ENCODE measurements at regions of chr6 and their contacts with region 1.

Region 1: GRCh38 chr6:125114248-125114858 is 39.2 kb upstream of the TPD52L1 start:
- DNase-seq: peak in 1 of 2 donors; percentile 19
- ATAC-seq: peak in 2 of 4 donors; percentile 61 to 79
- H3K4me3 ChIP-seq: no peak overlapping the region
- H3K27ac ChIP-seq: no peak overlapping the region
- H3K4me1 ChIP-seq: no peaks in the 10 kb centered on the region
- H3K27me3 ChIP-seq: no peaks in the 10 kb centered on the region
- CTCF ChIP-seq: peak; percentile 92

Region 2: GRCh38 chr6:124870611-124871459 is 243.5 kb before region 1 on chr6:
- intact Hi-C with region 1: loop called (anchors 2 to 5 kb)
- DNase-seq: no peak
- ATAC-seq: no peak
- H3K4me3 ChIP-seq: no peak overlapping the region
- H3K27ac ChIP-seq: no peak overlapping the region
- H3K4me1 ChIP-seq: no peaks in the 10 kb centered on the region
- H3K27me3 ChIP-seq: no peaks in the 10 kb centered on the region
- CTCF ChIP-seq: peak; percentile 62

Region 3: GRCh38 chr6:124961777-124962611 is 152.4 kb before region 1 on chr6 and contains the start of gene RNF217:
- intact Hi-C with region 1: loop called (anchors 5 to 10 kb)
- DNase-seq: peak; percentile 66 to 85
- ATAC-seq: peak; percentile 64 to 72 (median 68)
- H3K4me3 ChIP-seq: peak within 1 kb of the TSS; percentile 85
- H3K27ac ChIP-seq: peak within 1 kb of the TSS; percentile 96
- H3K4me1 ChIP-seq: peaks cover 32% of the 10 kb centered on the region
- H3K27me3 ChIP-seq: no peaks in the 10 kb centered on the region
- CTCF ChIP-seq: peak; percentile 25
- total RNA-seq, gene RNF217: 11.5 to 22.5 (median 15.5) TPM

Region 4: GRCh38 chr6:125153391-125154117 is 39.2 kb after region 1 on chr6 and contains the start of gene TPD52L1:
- intact Hi-C with region 1: no loop called
- DNase-seq: peak; percentile 83 to 95
- ATAC-seq: peak; percentile 92 to 95 (median 93)
- H3K4me3 ChIP-seq: peak within 1 kb of the TSS; percentile 78
- H3K27ac ChIP-seq: peak within 1 kb of the TSS; percentile 91
- H3K4me1 ChIP-seq: peaks cover 56% of the 10 kb centered on the region
- H3K27me3 ChIP-seq: no peaks in the 10 kb centered on the region
- CTCF ChIP-seq: peak; percentile 95
- total RNA-seq, gene TPD52L1: 106 to 150 (median 136) TPM

Region 5: GRCh38 chr6:125393449-125393858 is 279.1 kb after region 1 on chr6:
- intact Hi-C with region 1: no loop called
- DNase-seq: no peak
- ATAC-seq: no peak
- H3K4me3 ChIP-seq: no peak overlapping the region
- H3K27ac ChIP-seq: no peak overlapping the region
- H3K4me1 ChIP-seq: no peaks in the 10 kb centered on the region
- H3K27me3 ChIP-seq: no peaks in the 10 kb centered on the region
- CTCF ChIP-seq: no peak